ENCODE measurements at regions of chr2 and their contacts with region 1.

Region 1: GRCh38 chr2:32212295-32212694 is 46.6 kb downstream of the SLC30A6 start:
- DNase-seq: no peak
- ATAC-seq: no peak
- H3K4me3 ChIP-seq: no peak overlapping the region
- H3K27ac ChIP-seq: no peak overlapping the region
- H3K4me1 ChIP-seq: no peaks in the 10 kb centered on the region
- H3K27me3 ChIP-seq: no peaks in the 10 kb centered on the region
- CTCF ChIP-seq: no peak; the same call in 1 of the 2 replicates

Region 2: GRCh38 chr2:32260376-32260775 is 48.1 kb after region 1 on chr2:
- CTCF ChIA-PET with region 1: interaction called, 10 read pairs
- POLR2A ChIA-PET with region 1: no interaction called
- intact Hi-C with region 1: no loop called
- DNase-seq: no peak
- ATAC-seq: no peak
- H3K4me3 ChIP-seq: no peak overlapping the region
- H3K27ac ChIP-seq: no peak overlapping the region
- H3K4me1 ChIP-seq: no peaks in the 10 kb centered on the region
- H3K27me3 ChIP-seq: no peaks in the 10 kb centered on the region
- CTCF ChIP-seq: no peak

Region 3: DNA sequence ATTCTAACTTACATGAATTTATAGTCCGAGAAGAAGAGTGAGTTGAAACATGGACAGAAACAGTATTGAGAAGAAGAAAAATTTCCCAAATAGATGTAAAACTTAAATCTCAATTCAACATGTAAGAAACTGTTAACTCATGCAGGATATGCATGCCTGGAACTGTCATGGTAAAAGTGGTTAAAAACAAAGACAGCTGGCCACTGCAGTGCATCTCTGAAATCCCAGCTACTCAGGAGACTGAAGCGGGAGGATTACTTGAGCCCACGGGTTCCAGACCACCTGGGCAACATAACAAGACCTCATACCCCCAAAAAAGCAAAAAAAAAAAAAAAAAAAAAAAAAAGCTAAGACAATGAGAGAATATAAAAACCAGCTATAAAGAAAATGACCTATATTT is 322.5 kb after region 1 on chr2:
- CTCF ChIA-PET with region 1: interaction called, 24 read pairs
- POLR2A ChIA-PET with region 1: no interaction called
- intact Hi-C with region 1: no loop called
- DNase-seq: no peak
- ATAC-seq: no peak
- H3K4me3 ChIP-seq: no peak overlapping the region
- H3K27ac ChIP-seq: no peak overlapping the region
- H3K4me1 ChIP-seq: no peaks in the 10 kb centered on the region
- H3K27me3 ChIP-seq: no peaks in the 10 kb centered on the region
- CTCF ChIP-seq: no peak

Measured in PC-3 (cell line).